Naive thymus-derived CD4-positive, alpha-beta T cell (primary cell): ENCODE measurements at regions of chr13 and their contacts with region 1.

Region 1: GRCh38 chr13:30158774-30159445 is 148.4 kb downstream of the KATNAL1 start:
- DNase-seq: peak in 4 of 9 donors; percentile 30 to 48 (median 42)
- ATAC-seq: peak; percentile 67
- H3K4me3 ChIP-seq: no peak overlapping the region
- H3K4me3 Mint-ChIP-seq: peak overlapping the region in 2 of 10 donors; percentile 23 to 35
- H3K27ac ChIP-seq: no peak overlapping the region
- H3K27ac Mint-ChIP-seq: peak overlapping the region in 6 of 9 donors; percentile 21 to 59 (median 42)
- H3K4me1 ChIP-seq: peaks cover 5 to 35% of the 10 kb centered on the region in 2 donors
- H3K4me1 Mint-ChIP-seq: peaks cover 21 to 44% (median 33%) of the 10 kb centered on the region in 7 donors
- H3K27me3 ChIP-seq: no peaks in the 10 kb centered on the region
- H3K27me3 Mint-ChIP-seq: no peaks in the 10 kb centered on the region

Region 2: DNA sequence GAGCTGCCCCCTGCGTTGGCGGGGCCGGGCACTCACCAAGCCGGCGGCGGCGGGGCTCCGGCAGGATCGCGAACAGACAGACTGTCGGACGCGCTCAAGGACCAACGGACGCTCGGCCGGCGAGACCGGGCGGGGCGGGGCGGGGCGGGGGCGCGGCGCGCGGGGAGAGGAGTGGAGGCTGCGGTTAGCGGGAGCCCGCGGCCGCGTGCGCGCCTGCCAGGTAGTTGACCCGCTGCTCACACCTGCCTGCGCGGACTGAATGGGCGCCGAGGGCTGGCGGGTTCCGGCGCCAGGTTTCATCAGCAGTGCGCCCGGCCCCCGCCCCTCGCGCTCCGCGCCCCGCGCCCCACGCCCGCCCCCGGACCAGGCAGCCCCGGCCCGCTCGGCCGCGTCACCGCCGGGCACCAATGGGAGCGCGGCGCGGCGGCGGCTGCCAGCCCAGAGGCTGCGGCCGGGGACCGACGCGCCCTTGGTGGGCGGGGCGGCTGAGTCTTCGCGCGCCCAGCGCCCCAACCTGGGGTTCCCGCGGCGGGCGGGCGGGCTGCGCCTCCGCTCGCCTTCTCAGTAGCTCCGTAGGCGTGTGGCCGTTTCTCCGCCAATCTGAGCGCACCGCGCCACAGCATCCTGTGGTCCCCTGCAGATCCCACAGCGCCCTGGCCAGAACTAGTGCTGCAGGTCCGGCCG is 563.4 kb before region 1 on chr13 and contains the start of gene SLC7A1:
- CTCF ChIA-PET with region 1: no interaction called
- POLR2A ChIA-PET with region 1: no interaction called
- intact Hi-C with region 1: no loop called
- DNase-seq: peak; percentile 74 to 93 (median 85)
- ATAC-seq: peak; percentile 95
- H3K4me3 ChIP-seq: peak within 1 kb of the TSS; percentile 73
- H3K4me3 Mint-ChIP-seq: peak within 1 kb of the TSS; percentile 88 to 94 (median 90)
- H3K27ac ChIP-seq: peak within 1 kb of the TSS; percentile 82
- H3K27ac Mint-ChIP-seq: peak within 1 kb of the TSS; percentile 74 to 96 (median 87)
- H3K4me1 ChIP-seq: peaks cover 6 to 7% of the 10 kb centered on the region in 2 donors
- H3K4me1 Mint-ChIP-seq: peaks cover 26 to 49% (median 43%) of the 10 kb centered on the region in 7 donors
- H3K27me3 ChIP-seq: no peaks in the 10 kb centered on the region
- H3K27me3 Mint-ChIP-seq: peaks cover 0 to 3% (median 2%) of the 10 kb centered on the region in 5 donors
- total RNA-seq, gene SLC7A1: 12.2 to 63.8 (median 28.2) TPM

Region 3: GRCh38 chr13:29771247-29771646 is 387.7 kb before region 1 on chr13:
- CTCF ChIA-PET with region 1: interaction called, 8 read pairs
- POLR2A ChIA-PET with region 1: no interaction called
- intact Hi-C with region 1: loop called in 1 of 2 experiments (anchors 1 kb)
- DNase-seq: peak in 7 of 9 donors; percentile 31 to 67 (median 52)
- ATAC-seq: peak; percentile 77
- H3K4me3 ChIP-seq: no peak overlapping the region
- H3K4me3 Mint-ChIP-seq: no peak overlapping the region
- H3K27ac ChIP-seq: no peak overlapping the region
- H3K27ac Mint-ChIP-seq: peak overlapping the region in 1 of 9 donors; percentile 11
- H3K4me1 ChIP-seq: no peaks in the 10 kb centered on the region
- H3K4me1 Mint-ChIP-seq: peaks cover 0 to 14% (median 4%) of the 10 kb centered on the region in 7 donors
- H3K27me3 ChIP-seq: no peaks in the 10 kb centered on the region
- H3K27me3 Mint-ChIP-seq: no peaks in the 10 kb centered on the region

Region 4: GRCh38 chr13:29835280-29836061 is 323.4 kb before region 1 on chr13:
- CTCF ChIA-PET with region 1: no interaction called
- POLR2A ChIA-PET with region 1: no interaction called
- intact Hi-C with region 1: no loop called
- DNase-seq: no peak
- ATAC-seq: no peak
- H3K4me3 ChIP-seq: no peak overlapping the region
- H3K4me3 Mint-ChIP-seq: peak overlapping the region in 2 of 10 donors; percentile 1 to 26
- H3K27ac ChIP-seq: no peak overlapping the region
- H3K27ac Mint-ChIP-seq: peak overlapping the region in 1 of 9 donors; percentile 21
- H3K4me1 ChIP-seq: peaks cover 0 to 7% of the 10 kb centered on the region in 2 donors
- H3K4me1 Mint-ChIP-seq: peaks cover 6 to 81% (median 67%) of the 10 kb centered on the region in 7 donors
- H3K27me3 ChIP-seq: no peaks in the 10 kb centered on the region
- H3K27me3 Mint-ChIP-seq: no peaks in the 10 kb centered on the region

Region 5: GRCh38 chr13:30142486-30143211 is 16.3 kb before region 1 on chr13:
- CTCF ChIA-PET with region 1: interaction called, 20 read pairs
- POLR2A ChIA-PET with region 1: interaction called, 9 read pairs
- intact Hi-C with region 1: no loop called
- DNase-seq: peak in 1 of 9 donors; percentile 49
- ATAC-seq: peak; percentile 41
- H3K4me3 ChIP-seq: no peak overlapping the region
- H3K4me3 Mint-ChIP-seq: peak overlapping the region in 4 of 10 donors; percentile 10 to 61 (median 29)
- H3K27ac ChIP-seq: no peak overlapping the region
- H3K27ac Mint-ChIP-seq: peak overlapping the region; percentile 45 to 93 (median 76)
- H3K4me1 ChIP-seq: peaks cover 25 to 47% of the 10 kb centered on the region in 2 donors
- H3K4me1 Mint-ChIP-seq: peaks cover 29 to 64% (median 60%) of the 10 kb centered on the region in 7 donors
- H3K27me3 ChIP-seq: no peaks in the 10 kb centered on the region
- H3K27me3 Mint-ChIP-seq: peaks cover 0 to 5% (median 0%) of the 10 kb centered on the region in 5 donors